ENCODE measurements at regions of chr15 and their contacts with region 1.

Region 1: GRCh38 chr15:44711356-44712107 is at the start of gene B2M:
- DNase-seq: peak; percentile 96
- ATAC-seq: peak; percentile 95
- H3K4me3 ChIP-seq: peak within 1 kb of the TSS; percentile 83
- H3K27ac ChIP-seq: peak within 1 kb of the TSS; percentile 87
- H3K4me1 ChIP-seq: 0 out of 2 replicates have a peak, but pooled peaks cover 2% of the 10 kb centered on the region
- H3K27me3 ChIP-seq: no peaks in the 10 kb centered on the region
- CTCF ChIP-seq: no peak
- POLR2A ChIP-seq: peak; percentile 100
- RAD21 ChIP-seq: no peak
- total RNA-seq, gene B2M: 716 and 895 TPM in 2 replicates

Region 2: GRCh38 chr15:44231842-44232241 is 479.7 kb before region 1 on chr15:
- CTCF ChIA-PET with region 1: no interaction called
- POLR2A ChIA-PET with region 1: no interaction called
- dilution Hi-C with region 1: no loop called
- in situ Hi-C with region 1: no loop called
- intact Hi-C with region 1: no loop called
- DNase-seq: peak; percentile 34
- ATAC-seq: peak; percentile 72
- H3K4me3 ChIP-seq: no peak overlapping the region
- H3K27ac ChIP-seq: no peak overlapping the region
- H3K4me1 ChIP-seq: no peaks in the 10 kb centered on the region; the same call in 1 of the 2 replicates
- H3K27me3 ChIP-seq: no peaks in the 10 kb centered on the region; the same call in 1 of the 2 replicates
- CTCF ChIP-seq: no peak
- POLR2A ChIP-seq: no peak
- RAD21 ChIP-seq: no peak

Region 3: GRCh38 chr15:44676676-44677075 is 34.9 kb before region 1 on chr15:
- CTCF ChIA-PET with region 1: no interaction called
- POLR2A ChIA-PET with region 1: no interaction called
- dilution Hi-C with region 1: no loop called
- in situ Hi-C with region 1: no loop called
- intact Hi-C with region 1: no loop called
- DNase-seq: no peak
- ATAC-seq: no peak
- H3K4me3 ChIP-seq: no peak overlapping the region
- H3K27ac ChIP-seq: no peak overlapping the region
- H3K4me1 ChIP-seq: no peaks in the 10 kb centered on the region
- H3K27me3 ChIP-seq: peaks cover 32% of the 10 kb centered on the region
- CTCF ChIP-seq: no peak
- POLR2A ChIP-seq: no peak
- RAD21 ChIP-seq: no peak

Region 4: DNA sequence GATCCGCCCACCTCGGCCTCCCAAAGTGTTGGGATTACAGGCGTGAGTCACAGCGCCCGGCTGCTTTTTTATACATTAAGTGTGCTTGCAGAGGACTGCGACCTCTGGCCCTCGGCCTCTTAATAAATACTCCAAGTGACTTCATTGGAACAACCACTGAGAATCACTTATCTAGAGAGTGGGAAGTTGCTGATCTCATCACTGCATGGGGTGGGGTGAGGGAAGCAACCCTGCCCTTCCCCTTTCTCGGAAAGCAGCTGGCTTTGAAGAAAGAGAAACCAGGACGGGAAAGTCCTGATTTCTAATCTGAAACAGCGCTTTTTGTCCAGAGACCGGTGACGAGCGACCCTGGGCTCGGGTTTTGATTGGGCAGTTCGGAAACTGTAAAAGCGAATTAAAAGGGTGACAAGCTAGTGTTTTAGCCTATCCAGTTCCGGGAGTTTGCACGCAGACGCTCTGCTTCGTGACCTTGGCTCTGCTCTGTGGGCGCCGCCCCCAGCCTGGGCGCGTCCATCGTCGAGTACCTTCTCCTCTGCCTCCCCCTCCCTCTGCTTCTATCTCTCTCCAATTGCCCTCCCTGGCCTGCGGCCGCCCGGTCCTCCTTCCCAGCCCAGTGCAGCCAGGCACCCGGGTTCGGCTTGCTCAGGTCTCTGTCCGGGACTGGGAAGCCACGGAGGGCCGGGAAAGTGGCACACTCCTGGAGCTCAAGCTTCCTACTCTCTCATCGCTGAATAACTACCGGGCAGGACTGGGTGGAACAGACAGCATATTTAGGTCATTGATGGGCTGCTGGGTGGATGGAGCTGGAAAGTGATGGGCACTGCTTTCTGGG is 17.3 kb after region 1 on chr15:
- CTCF ChIA-PET with region 1: interaction called, 6 read pairs
- POLR2A ChIA-PET with region 1: interaction called, 3 read pairs
- dilution Hi-C with region 1: no loop called
- in situ Hi-C with region 1: no loop called
- intact Hi-C with region 1: loop called (anchors 1 kb)
- DNase-seq: peak; percentile 99
- ATAC-seq: peak; percentile 93
- H3K4me3 ChIP-seq: peak overlapping the region; percentile 56
- H3K27ac ChIP-seq: peak overlapping the region; percentile 83
- H3K4me1 ChIP-seq: peaks cover 2% of the 10 kb centered on the region; the same call in 1 of the 2 replicates
- H3K27me3 ChIP-seq: no peaks in the 10 kb centered on the region
- CTCF ChIP-seq: no peak
- POLR2A ChIP-seq: peak; percentile 58
- RAD21 ChIP-seq: no peak

Region 5: GRCh38 chr15:44788748-44789147 is 77.2 kb after region 1 on chr15:
- CTCF ChIA-PET with region 1: interaction called, 10 read pairs
- POLR2A ChIA-PET with region 1: no interaction called
- dilution Hi-C with region 1: no loop called
- in situ Hi-C with region 1: no loop called
- intact Hi-C with region 1: no loop called
- DNase-seq: no peak
- ATAC-seq: no peak
- H3K4me3 ChIP-seq: no peak overlapping the region
- H3K27ac ChIP-seq: no peak overlapping the region
- H3K4me1 ChIP-seq: no peaks in the 10 kb centered on the region
- H3K27me3 ChIP-seq: peaks cover 21% of the 10 kb centered on the region
- CTCF ChIP-seq: no peak
- POLR2A ChIP-seq: no peak
- RAD21 ChIP-seq: no peak

Region 6: GRCh38 chr15:45091161-45091560 is 379.6 kb after region 1 on chr15:
- CTCF ChIA-PET with region 1: no interaction called
- POLR2A ChIA-PET with region 1: no interaction called
- dilution Hi-C with region 1: no loop called
- in situ Hi-C with region 1: no loop called
- intact Hi-C with region 1: no loop called
- DNase-seq: peak; percentile 66
- ATAC-seq: peak; percentile 83
- H3K4me3 ChIP-seq: no peak overlapping the region
- H3K27ac ChIP-seq: peak overlapping the region; percentile 96
- H3K4me1 ChIP-seq: peaks cover 10% of the 10 kb centered on the region; the same call in 1 of the 2 replicates
- H3K27me3 ChIP-seq: peaks cover 36% of the 10 kb centered on the region
- CTCF ChIP-seq: no peak
- POLR2A ChIP-seq: no peak
- RAD21 ChIP-seq: no peak

Measured in IMR-90 (cell line).